ENCODE measurements at regions of chr4 and their contacts with region 1.

Region 1: DNA sequence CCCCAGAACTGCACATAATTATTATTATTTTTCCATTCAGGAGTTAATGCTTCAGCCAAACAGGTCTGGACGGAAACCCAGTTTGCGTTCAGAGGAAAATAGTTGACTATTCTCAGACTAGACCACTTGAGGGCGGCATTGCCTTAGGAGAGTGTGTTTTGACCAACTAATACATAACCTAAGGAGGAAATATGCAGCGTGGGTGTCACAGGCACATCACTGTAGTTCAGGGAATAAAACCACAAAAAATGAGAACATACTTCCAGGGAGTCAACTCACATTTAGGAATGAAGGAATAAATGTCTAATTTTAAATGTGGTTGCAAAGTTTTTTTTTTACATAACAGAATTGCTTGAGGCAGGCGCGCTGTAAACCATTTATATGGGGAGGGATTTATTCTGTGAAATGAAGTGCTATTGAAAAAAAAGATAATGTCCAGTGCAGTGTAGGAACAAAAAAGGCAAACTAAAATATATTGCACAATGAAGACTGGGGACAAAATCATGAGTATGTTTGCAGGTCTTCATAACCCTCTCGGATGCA is 93.3 kb downstream of the SYNPO2 start:
- DNase-seq: peak in 1 of 2 donors; percentile 89
- H3K4me3 ChIP-seq: no peak overlapping the region
- H3K27ac ChIP-seq: peak overlapping the region; percentile 95 to 96
- H3K4me1 ChIP-seq: peaks cover 30 to 65% of the 10 kb centered on the region in 2 donors
- H3K27me3 ChIP-seq: no peaks in the 10 kb centered on the region
- CTCF ChIP-seq: peak; percentile 68 to 90 (median 82)

Region 2: DNA sequence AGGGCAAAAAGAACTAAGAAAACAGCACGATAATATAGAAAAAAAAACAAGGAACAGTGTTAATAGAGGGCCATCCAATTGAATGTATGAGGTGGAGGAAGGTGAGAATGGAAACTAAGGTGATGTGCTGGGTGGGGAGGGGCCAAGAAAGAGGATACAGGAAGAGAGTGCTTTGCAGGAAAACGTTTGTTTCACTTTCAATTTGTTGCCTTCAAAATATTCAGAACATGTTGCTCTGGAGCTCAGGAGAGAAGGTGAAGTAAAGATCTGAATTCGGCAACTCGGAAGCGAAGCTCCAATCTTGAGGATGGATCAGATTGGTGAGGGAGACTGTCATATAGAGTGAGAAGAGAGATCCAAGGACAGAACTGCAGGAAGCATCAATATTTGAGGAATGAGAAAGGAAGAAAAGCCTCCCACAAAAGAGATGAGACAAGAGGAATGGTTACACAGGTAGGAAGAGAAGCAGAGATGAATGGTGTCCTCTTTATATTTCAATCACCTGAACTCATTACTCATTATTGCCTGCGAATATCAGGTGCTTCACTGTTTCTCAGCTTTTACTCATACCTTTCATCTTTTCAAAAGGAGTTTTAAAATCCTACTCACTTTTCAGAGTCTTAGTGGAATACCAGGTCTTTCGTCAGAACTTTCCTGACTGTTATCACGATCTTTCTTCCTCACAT is 131.3 kb before region 1 on chr4:
- intact Hi-C with region 1: no loop called
- DNase-seq: no peak
- H3K4me3 ChIP-seq: peak overlapping the region; percentile 55 to 64
- H3K27ac ChIP-seq: no peak overlapping the region
- H3K4me1 ChIP-seq: no peaks in the 10 kb centered on the region
- H3K27me3 ChIP-seq: no peaks in the 10 kb centered on the region
- CTCF ChIP-seq: no peak

Region 3: GRCh38 chr4:119068529-119068962 is 86.6 kb after region 1 on chr4:
- intact Hi-C with region 1: no loop called
- DNase-seq: no peak
- H3K4me3 ChIP-seq: no peak overlapping the region
- H3K27ac ChIP-seq: peak overlapping the region; percentile 44 to 48
- H3K4me1 ChIP-seq: no peaks in the 10 kb centered on the region
- H3K27me3 ChIP-seq: no peaks in the 10 kb centered on the region
- CTCF ChIP-seq: no peak

Region 4: GRCh38 chr4:119138046-119138445 is 156.1 kb after region 1 on chr4:
- intact Hi-C with region 1: loop called (anchors 5 kb)
- DNase-seq: no peak
- H3K4me3 ChIP-seq: no peak overlapping the region
- H3K27ac ChIP-seq: no peak overlapping the region
- H3K4me1 ChIP-seq: peaks cover 0 to 31% of the 10 kb centered on the region in 2 donors
- H3K27me3 ChIP-seq: no peaks in the 10 kb centered on the region
- CTCF ChIP-seq: no peak

Region 5: GRCh38 chr4:119490335-119490734 is 508.4 kb after region 1 on chr4:
- intact Hi-C with region 1: loop called (anchors 10 kb)
- DNase-seq: no peak
- H3K4me3 ChIP-seq: no peak overlapping the region
- H3K27ac ChIP-seq: no peak overlapping the region
- H3K4me1 ChIP-seq: no peaks in the 10 kb centered on the region
- H3K27me3 ChIP-seq: no peaks in the 10 kb centered on the region
- CTCF ChIP-seq: peak in 1 of 3 experiments; percentile 27

Region 6: GRCh38 chr4:120056246-120056645 is 1074.3 kb after region 1 on chr4:
- intact Hi-C with region 1: loop called (anchors 5 kb)
- DNase-seq: no peak
- H3K4me3 ChIP-seq: no peak overlapping the region
- H3K27ac ChIP-seq: peak overlapping the region in 1 of 2 donors; percentile 57
- H3K4me1 ChIP-seq: peaks cover 6 to 24% of the 10 kb centered on the region in 2 donors
- H3K27me3 ChIP-seq: no peaks in the 10 kb centered on the region
- CTCF ChIP-seq: peak; percentile 23 to 58 (median 40)